ENCODE measurements at regions of chr2 and their contacts with region 1.

Region 1: DNA sequence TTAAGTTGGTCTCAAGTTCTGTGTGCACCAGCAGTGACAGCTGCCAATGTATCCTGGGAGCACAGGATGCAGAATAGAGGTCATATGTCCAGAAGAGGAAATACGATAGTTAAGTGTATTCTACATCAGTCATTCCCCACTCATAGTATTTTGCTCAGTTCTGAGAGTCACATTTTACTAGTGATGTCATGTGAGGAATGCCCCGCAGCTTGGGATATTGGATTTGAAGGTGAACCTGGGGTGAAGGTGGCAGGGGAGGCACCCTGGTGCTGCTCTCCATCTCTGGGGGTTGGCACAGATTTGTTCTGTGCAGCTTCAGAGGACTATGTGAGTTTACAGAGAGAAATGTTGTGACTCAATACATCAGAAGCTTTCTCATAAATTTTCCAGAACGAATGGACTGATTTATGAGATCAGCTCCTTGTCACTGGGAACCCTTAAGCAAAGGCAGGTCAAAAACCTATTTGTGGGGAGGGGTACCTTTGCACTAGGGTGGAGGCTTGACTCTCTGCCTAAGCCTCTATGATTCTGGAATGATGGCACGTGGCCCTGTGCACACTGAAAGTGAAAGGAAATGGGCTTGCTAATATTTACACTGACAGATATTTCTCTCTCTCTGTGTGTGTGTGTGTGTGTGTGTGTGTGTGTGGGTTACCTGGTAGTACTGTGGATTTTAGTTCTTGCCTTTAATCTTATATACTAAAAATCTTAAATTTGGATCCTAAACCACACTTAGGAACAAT is 95.9 kb downstream of the NEB start:
- DNase-seq: peak; percentile 69
- H3K4me3 ChIP-seq: no peak overlapping the region
- H3K27ac ChIP-seq: peak overlapping the region; percentile 81
- H3K4me1 ChIP-seq: peaks cover 22% of the 10 kb centered on the region
- H3K27me3 ChIP-seq: no peaks in the 10 kb centered on the region
- CTCF ChIP-seq: no peak
- POLR2A ChIP-seq: no peak

Region 2: DNA sequence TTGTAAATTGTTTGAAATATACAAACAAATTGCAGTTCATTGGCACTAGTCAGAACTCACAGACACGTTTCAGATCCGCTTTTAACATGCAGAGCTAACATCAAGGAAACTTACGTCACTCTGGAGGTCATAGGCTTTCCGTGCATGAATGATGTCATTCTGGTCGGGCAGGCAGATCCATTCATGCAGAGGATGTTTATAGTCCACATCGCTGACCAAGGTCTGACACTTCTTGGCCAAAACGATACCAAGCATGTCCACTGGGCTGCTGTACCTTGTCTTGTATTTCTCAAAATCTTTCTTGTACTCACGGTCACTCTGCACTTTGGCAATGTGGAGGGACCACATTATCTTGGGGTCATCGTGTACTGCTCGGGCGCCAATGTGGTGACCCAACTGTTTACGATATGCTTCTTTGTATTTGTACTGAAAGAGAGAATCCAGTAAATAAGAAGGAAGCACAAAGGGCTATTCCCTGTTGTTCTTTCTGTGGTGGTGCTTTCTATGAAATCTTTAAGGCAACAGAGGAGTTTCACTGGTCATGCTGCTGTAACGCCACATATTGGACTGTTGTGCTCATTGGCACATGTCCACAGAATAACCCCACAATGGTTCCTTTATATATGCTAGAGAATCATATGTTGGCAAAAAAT is 18.9 kb before region 1 on chr2:
- CTCF ChIA-PET with region 1: interaction called, 7 read pairs
- POLR2A ChIA-PET with region 1: no interaction called
- dilution Hi-C with region 1: no loop called
- intact Hi-C with region 1: loop called (anchors 1 kb)
- DNase-seq: peak; percentile 97
- H3K4me3 ChIP-seq: peak overlapping the region in 1 of 3 experiments; percentile 46
- H3K27ac ChIP-seq: peak overlapping the region; percentile 93
- H3K4me1 ChIP-seq: peaks cover 41% of the 10 kb centered on the region
- H3K27me3 ChIP-seq: no peaks in the 10 kb centered on the region
- CTCF ChIP-seq: peak; percentile 54 to 56
- POLR2A ChIP-seq: peak; percentile 60

Region 3: DNA sequence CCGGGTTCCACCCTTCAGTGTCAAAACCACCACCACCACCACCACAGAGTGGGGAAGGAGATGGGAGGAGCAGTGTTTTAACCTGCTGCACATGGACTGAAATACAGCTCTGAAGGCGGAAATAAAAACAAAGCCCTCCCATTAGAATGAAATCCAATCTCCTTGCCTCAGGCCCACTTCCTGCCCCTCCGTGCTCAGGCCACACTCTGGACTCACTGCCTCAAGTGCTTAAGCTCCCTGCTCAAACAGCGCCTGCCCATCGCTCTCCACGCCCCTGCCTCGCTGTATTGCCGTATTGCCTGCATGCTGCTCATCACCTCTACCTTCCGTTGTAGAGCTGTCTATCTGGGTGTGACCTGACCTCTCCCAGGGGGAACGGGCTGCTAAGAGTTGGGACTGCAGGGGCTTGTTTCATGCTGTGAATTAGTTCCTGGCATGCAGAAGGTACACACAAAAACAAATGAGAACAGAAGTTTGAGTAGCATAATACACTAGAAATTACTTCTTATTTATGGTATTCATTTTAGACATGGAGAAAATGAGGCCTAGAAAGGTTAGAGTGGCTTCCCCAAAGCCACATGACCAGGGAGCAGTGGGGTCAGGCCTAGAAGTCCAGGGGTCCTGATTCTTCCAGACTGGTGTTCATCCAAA is 127.5 kb after region 1 on chr2:
- CTCF ChIA-PET with region 1: no interaction called
- POLR2A ChIA-PET with region 1: no interaction called
- dilution Hi-C with region 1: no loop called
- intact Hi-C with region 1: loop called (anchors 1 kb)
- DNase-seq: peak; percentile 50
- H3K4me3 ChIP-seq: no peak overlapping the region
- H3K27ac ChIP-seq: no peak overlapping the region
- H3K4me1 ChIP-seq: peaks cover 34% of the 10 kb centered on the region
- H3K27me3 ChIP-seq: no peaks in the 10 kb centered on the region
- CTCF ChIP-seq: no peak
- POLR2A ChIP-seq: no peak

Region 4: GRCh38 chr2:151808258-151809072 is 170.1 kb after region 1 on chr2:
- CTCF ChIA-PET with region 1: interaction called, 15 read pairs
- POLR2A ChIA-PET with region 1: no interaction called
- dilution Hi-C with region 1: no loop called
- intact Hi-C with region 1: loop called (anchors 5 kb)
- DNase-seq: peak; percentile 26
- H3K4me3 ChIP-seq: no peak overlapping the region
- H3K27ac ChIP-seq: no peak overlapping the region
- H3K4me1 ChIP-seq: peaks cover 5% of the 10 kb centered on the region
- H3K27me3 ChIP-seq: no peaks in the 10 kb centered on the region
- CTCF ChIP-seq: peak in 1 of 2 donors; percentile 28
- POLR2A ChIP-seq: no peak

Region 5: DNA sequence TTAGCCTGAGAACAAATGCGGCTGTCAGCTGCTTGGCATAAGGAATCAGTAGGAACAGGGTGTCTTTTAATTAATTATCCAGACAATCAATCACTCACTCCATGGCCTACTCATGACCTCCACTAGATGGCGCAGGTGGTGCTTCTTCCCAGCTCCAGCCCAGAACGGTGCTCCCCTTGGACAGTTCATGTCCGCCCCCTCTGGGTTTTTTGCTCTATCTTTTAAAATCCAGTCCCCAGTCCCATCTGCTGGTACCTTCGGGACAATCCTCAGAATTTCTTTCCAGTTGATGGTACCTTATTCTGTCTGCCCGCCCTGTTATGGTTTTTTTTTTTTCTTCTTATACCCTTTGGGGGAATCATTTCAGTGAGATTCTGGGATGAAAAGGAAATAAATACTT is 360.7 kb after region 1 on chr2:
- CTCF ChIA-PET with region 1: interaction called, 3 read pairs
- POLR2A ChIA-PET with region 1: no interaction called
- dilution Hi-C with region 1: no loop called
- intact Hi-C with region 1: loop called (anchors 1 kb)
- DNase-seq: peak; percentile 37
- H3K4me3 ChIP-seq: no peak overlapping the region
- H3K27ac ChIP-seq: no peak overlapping the region
- H3K4me1 ChIP-seq: no peaks in the 10 kb centered on the region
- H3K27me3 ChIP-seq: peaks cover 0 to 5% of the 10 kb centered on the region in 2 experiments
- CTCF ChIP-seq: peak; percentile 83 to 86
- POLR2A ChIP-seq: no peak